A673 (cell line): ENCODE measurements at regions of chr17 and their contacts with region 1.

Region 1: DNA sequence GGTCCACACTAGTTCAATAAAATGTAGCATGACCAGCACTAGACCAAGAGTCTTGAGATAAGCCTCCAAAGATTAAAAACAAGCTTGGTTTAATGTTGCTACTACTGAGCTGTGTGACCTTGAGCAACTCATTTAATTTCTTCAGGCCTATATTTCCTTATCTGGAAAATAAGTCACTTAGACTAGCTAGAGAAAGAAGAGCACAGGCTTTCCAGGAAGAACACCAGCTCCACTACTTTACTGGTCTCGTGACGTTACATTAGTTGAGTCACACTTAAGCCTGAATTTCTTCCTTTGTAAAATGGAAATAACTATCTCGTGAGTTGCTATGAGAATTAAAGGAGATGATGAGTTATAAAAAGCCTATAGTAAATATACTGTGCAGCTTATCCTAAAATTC is 5.4 kb downstream of the HELZ start:
- DNase-seq: no peak
- H3K4me3 ChIP-seq: no peak overlapping the region
- H3K27ac ChIP-seq: peak overlapping the region; percentile 22
- H3K4me1 ChIP-seq: peaks cover 27% of the 10 kb centered on the region
- H3K27me3 ChIP-seq: no peaks in the 10 kb centered on the region
- CTCF ChIP-seq: no peak

Region 2: GRCh38 chr17:67105213-67105612 is 134.4 kb before region 1 on chr17:
- CTCF ChIA-PET with region 1: no interaction called
- POLR2A ChIA-PET with region 1: no interaction called
- intact Hi-C with region 1: no loop called
- DNase-seq: no peak
- H3K4me3 ChIP-seq: no peak overlapping the region
- H3K27ac ChIP-seq: no peak overlapping the region
- H3K4me1 ChIP-seq: no peaks in the 10 kb centered on the region
- H3K27me3 ChIP-seq: no peaks in the 10 kb centered on the region
- CTCF ChIP-seq: no peak

Region 3: DNA sequence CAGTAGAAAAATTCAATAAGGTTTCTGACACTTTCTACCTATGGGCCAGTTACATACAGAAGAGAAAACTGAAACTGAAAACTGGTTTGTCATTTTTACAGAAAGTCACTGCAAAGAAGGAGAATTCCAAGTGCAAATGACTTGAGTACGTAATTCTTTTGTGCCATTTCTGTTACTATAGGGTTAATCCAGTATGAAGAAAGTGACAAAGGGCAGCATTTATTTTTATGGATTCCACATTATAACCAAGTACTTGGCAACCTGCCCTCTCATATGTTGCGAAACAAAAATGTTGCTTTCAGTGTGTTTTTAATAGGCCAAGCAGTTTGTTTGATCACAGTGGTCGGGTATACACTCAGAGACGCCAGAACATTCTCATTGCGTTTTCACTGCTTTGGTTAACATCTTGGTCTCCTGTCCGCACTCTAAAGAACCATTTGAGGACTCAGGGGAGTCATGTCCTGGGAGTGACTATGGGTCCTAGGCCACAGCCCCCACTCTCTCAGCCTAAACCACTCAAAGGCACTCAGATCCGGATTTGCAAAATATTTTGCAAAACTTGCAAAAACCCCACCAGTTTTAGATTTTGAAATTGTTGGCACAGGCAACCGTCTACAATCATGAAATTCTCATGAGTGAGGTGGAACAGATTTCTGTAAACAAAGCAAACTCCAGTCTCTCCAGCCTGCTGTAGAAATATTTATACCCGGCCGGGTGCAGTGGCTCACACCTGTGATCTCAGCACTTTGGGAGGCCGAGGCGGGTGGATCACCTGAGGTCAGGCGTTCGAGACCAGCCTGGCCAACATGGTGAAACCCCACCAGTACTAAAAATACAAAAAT is 20.8 kb after region 1 on chr17:
- CTCF ChIA-PET with region 1: no interaction called
- POLR2A ChIA-PET with region 1: interaction called, 13 read pairs
- intact Hi-C with region 1: no loop called
- DNase-seq: peak; percentile 83
- H3K4me3 ChIP-seq: peak overlapping the region; percentile 3
- H3K27ac ChIP-seq: peak overlapping the region; percentile 8
- H3K4me1 ChIP-seq: peaks cover 25% of the 10 kb centered on the region
- H3K27me3 ChIP-seq: no peaks in the 10 kb centered on the region
- CTCF ChIP-seq: no peak